ENCODE measurements at regions of chr14 and their contacts with region 1.

Region 1: GRCh38 chr14:99266181-99267178 is 5.5 kb downstream of the BCL11B start:
- DNase-seq: peak in 1 of 2 experiments; percentile 89
- H3K4me3 ChIP-seq: peak overlapping the region in 3 of 4 experiments; percentile 3 to 42 (median 23); a peak in 2 of 8 replicates
- H3K27ac ChIP-seq: no peak overlapping the region
- H3K4me1 ChIP-seq: peaks cover 27 to 36% (median 32%) of the 10 kb centered on the region in 4 experiments
- H3K27me3 ChIP-seq: peaks cover 0 to 7% (median 3%) of the 10 kb centered on the region in 4 experiments; a peak in 3 of 7 replicates
- CTCF ChIP-seq: peak; percentile 93 to 99 (median 97)
- EP300 ChIP-seq: no peak; a peak in 1 of 3 replicates
- POLR2A ChIP-seq: no peak
- RAD21 ChIP-seq: peak; percentile 99

Region 2: GRCh38 chr14:99122521-99123125 is 143.9 kb before region 1 on chr14:
- CTCF ChIA-PET with region 1: interaction called, 16 read pairs
- POLR2A ChIA-PET with region 1: no interaction called
- DNase-seq: peak in 1 of 2 experiments; percentile 44
- H3K4me3 ChIP-seq: no peak overlapping the region
- H3K27ac ChIP-seq: no peak overlapping the region
- H3K4me1 ChIP-seq: peaks cover 0 to 4% (median 0%) of the 10 kb centered on the region in 4 experiments; a peak in 3 of 7 replicates
- H3K27me3 ChIP-seq: no peaks in the 10 kb centered on the region
- CTCF ChIP-seq: no peak
- EP300 ChIP-seq: no peak
- POLR2A ChIP-seq: no peak
- RAD21 ChIP-seq: peak in 1 of 2 experiments; percentile 8; a peak in 1 of 4 replicates

Region 3: DNA sequence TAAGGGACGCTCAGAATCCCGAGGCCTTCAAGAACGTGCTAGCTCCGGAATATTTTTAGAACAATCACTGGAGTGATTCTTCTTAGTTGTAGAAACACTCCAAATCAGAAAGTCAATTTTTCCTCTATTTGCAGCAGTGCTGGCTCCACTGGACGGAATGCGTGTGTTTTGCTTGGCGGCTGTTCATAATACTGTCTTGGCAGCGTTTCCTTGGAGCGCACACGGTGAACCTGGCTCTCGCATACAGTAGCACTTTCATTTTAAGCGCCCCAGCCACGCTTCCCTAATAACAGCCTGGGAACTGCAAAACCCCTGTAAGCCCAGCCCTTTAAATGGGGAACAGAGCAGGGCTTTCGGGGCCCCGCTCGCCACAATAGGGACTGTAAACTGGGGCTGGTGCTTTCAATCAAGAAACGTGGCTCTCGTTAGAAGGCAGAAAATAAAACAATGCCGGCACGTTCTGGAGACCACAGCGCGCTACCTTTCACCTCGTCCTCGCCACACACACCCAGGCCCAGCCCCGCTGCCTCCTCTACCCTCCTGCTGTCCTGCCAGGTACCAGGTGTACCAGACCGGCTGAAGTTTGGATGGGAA is 74.4 kb before region 1 on chr14:
- CTCF ChIA-PET with region 1: interaction called, 34 read pairs
- POLR2A ChIA-PET with region 1: interaction called, 6 read pairs
- DNase-seq: no peak
- H3K4me3 ChIP-seq: no peak overlapping the region
- H3K27ac ChIP-seq: no peak overlapping the region
- H3K4me1 ChIP-seq: peaks cover 5 to 21% (median 13%) of the 10 kb centered on the region in 4 experiments
- H3K27me3 ChIP-seq: no peaks in the 10 kb centered on the region
- CTCF ChIP-seq: no peak
- EP300 ChIP-seq: no peak
- POLR2A ChIP-seq: no peak
- RAD21 ChIP-seq: no peak

Region 4: GRCh38 chr14:99215277-99215676 is 51.2 kb before region 1 on chr14:
- CTCF ChIA-PET with region 1: interaction called, 10 read pairs
- POLR2A ChIA-PET with region 1: no interaction called
- DNase-seq: no peak
- H3K4me3 ChIP-seq: no peak overlapping the region
- H3K27ac ChIP-seq: no peak overlapping the region
- H3K4me1 ChIP-seq: peaks cover 0 to 4% (median 2%) of the 10 kb centered on the region in 4 experiments; a peak in 2 of 7 replicates
- H3K27me3 ChIP-seq: no peaks in the 10 kb centered on the region
- CTCF ChIP-seq: no peak
- EP300 ChIP-seq: no peak
- POLR2A ChIP-seq: no peak
- RAD21 ChIP-seq: no peak

Region 5: DNA sequence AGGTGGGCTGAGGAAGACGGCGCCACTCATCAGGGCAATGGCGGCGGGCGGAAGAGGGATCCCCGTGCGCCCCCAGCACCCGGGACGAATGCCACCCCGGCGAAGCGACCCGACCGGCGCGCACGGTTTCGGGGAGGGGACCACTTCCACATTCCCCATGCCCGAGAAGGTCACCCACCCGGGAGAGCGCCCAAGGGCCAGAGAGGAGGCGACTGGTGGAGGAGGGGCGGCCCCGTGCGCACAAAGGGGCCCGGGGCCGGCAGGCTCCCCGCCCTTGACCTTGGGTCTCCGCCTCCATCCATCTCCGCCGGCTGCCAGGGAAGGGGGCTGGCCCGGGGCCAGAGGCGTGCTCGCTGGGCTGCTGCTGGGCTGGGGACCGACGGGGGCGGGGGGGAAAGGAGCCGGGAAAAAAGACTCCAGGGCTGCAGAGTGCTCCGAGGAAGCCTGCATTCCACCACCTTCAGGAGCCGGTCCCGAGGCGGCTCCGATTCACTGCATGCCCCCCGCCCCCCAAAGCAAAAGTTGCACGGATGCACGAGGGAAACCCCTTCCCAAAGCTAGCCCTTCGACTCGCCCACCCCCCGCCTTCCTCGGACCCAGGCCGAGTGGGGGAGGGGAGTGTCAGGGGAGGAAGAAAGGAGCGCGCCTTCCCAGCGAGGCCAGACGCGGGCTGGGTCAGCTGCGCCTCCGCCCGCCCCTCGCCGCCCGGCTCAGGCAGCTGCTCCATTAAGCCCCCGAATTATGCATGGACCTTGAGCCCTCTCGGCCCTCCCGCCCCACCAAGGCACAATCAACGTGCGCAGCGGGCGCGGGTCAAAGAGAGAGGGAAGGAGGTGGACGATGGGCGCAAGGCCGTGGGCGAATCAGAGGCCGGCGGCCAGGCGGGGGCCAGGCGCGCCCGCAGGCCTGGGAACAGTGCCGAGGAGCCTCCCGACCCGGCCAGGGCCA is 20.6 kb before region 1 on chr14:
- CTCF ChIA-PET with region 1: interaction called, 9 read pairs
- POLR2A ChIA-PET with region 1: interaction called, 17 read pairs
- DNase-seq: peak in 1 of 2 experiments; percentile 87
- H3K4me3 ChIP-seq: peak overlapping the region; percentile 51 to 75 (median 66)
- H3K27ac ChIP-seq: peak overlapping the region; percentile 95
- H3K4me1 ChIP-seq: peaks cover 21 to 51% (median 43%) of the 10 kb centered on the region in 4 experiments
- H3K27me3 ChIP-seq: peaks cover 0 to 7% (median 3%) of the 10 kb centered on the region in 4 experiments; a peak in 4 of 7 replicates
- CTCF ChIP-seq: no peak
- EP300 ChIP-seq: peak in 1 of 2 experiments; percentile 64; a peak in 1 of 3 replicates
- POLR2A ChIP-seq: peak in 1 of 2 experiments; percentile 44; a peak in 2 of 3 replicates
- RAD21 ChIP-seq: no peak

Region 6: GRCh38 chr14:99277530-99277929 is 11.1 kb after region 1 on chr14:
- CTCF ChIA-PET with region 1: interaction called, 10 read pairs
- POLR2A ChIA-PET with region 1: interaction called, 5 read pairs
- DNase-seq: no peak
- H3K4me3 ChIP-seq: no peak overlapping the region
- H3K27ac ChIP-seq: no peak overlapping the region
- H3K4me1 ChIP-seq: peaks cover 2 to 10% (median 4%) of the 10 kb centered on the region in 4 experiments; a peak in 6 of 7 replicates
- H3K27me3 ChIP-seq: peaks cover 0 to 6% (median 1%) of the 10 kb centered on the region in 4 experiments; a peak in 2 of 7 replicates
- CTCF ChIP-seq: no peak
- EP300 ChIP-seq: no peak
- POLR2A ChIP-seq: no peak
- RAD21 ChIP-seq: no peak; a peak in 1 of 4 replicates

Region 7: DNA sequence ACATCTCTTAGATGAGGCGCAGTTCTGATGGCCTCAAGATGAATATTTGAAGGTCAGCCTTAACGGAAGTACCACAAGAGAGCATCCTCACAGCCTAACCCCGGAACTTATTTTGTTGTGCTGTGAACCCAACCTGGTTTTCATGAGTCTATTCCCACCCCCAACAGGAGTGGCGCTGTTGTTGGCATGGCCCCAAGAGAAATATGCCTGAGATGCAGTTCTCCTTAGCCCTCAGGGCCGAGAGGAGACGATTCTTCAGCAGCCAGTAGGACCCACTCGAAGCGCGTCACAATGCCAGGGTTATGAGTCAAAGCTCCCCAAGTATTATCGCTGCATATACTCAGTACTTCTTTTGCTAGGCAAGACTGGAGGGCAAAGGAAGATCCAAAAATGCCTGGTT is 30.0 kb after region 1 on chr14:
- CTCF ChIA-PET with region 1: no interaction called
- POLR2A ChIA-PET with region 1: no interaction called
- DNase-seq: peak in 1 of 2 experiments; percentile 49
- H3K4me3 ChIP-seq: no peak overlapping the region
- H3K27ac ChIP-seq: no peak overlapping the region
- H3K4me1 ChIP-seq: peaks cover 0 to 7% (median 1%) of the 10 kb centered on the region in 4 experiments; a peak in 3 of 7 replicates
- H3K27me3 ChIP-seq: no peaks in the 10 kb centered on the region
- CTCF ChIP-seq: peak; percentile 29 to 57 (median 42)
- EP300 ChIP-seq: no peak
- POLR2A ChIP-seq: no peak
- RAD21 ChIP-seq: peak in 1 of 2 experiments; percentile 15; a peak in 1 of 4 replicates

Region 8: GRCh38 chr14:99326041-99326710 is 59.7 kb after region 1 on chr14:
- CTCF ChIA-PET with region 1: no interaction called
- POLR2A ChIA-PET with region 1: no interaction called
- DNase-seq: peak in 1 of 2 experiments; percentile 11
- H3K4me3 ChIP-seq: no peak overlapping the region
- H3K27ac ChIP-seq: no peak overlapping the region
- H3K4me1 ChIP-seq: peaks cover 0 to 3% (median 0%) of the 10 kb centered on the region in 4 experiments; a peak in 1 of 7 replicates
- H3K27me3 ChIP-seq: no peaks in the 10 kb centered on the region
- CTCF ChIP-seq: no peak
- EP300 ChIP-seq: no peak
- POLR2A ChIP-seq: no peak
- RAD21 ChIP-seq: no peak